Transverse colon (tissue), 4 donors: ENCODE measurements at regions of chr5 and their contacts with region 1.

Region 1: GRCh38 chr5:115309751-115310370 is 13.4 kb upstream of the CCDC112 start:
- DNase-seq: no peak
- H3K4me3 ChIP-seq: no peak overlapping the region
- H3K27ac ChIP-seq: no peak overlapping the region
- H3K4me1 ChIP-seq: peaks cover 0 to 14% (median 6%) of the 10 kb centered on the region in 4 donors
- H3K27me3 ChIP-seq: no peaks in the 10 kb centered on the region
- CTCF ChIP-seq: peak; percentile 65 to 79 (median 71)
- EP300 ChIP-seq: no peak
- POLR2A ChIP-seq: no peak

Region 2: DNA sequence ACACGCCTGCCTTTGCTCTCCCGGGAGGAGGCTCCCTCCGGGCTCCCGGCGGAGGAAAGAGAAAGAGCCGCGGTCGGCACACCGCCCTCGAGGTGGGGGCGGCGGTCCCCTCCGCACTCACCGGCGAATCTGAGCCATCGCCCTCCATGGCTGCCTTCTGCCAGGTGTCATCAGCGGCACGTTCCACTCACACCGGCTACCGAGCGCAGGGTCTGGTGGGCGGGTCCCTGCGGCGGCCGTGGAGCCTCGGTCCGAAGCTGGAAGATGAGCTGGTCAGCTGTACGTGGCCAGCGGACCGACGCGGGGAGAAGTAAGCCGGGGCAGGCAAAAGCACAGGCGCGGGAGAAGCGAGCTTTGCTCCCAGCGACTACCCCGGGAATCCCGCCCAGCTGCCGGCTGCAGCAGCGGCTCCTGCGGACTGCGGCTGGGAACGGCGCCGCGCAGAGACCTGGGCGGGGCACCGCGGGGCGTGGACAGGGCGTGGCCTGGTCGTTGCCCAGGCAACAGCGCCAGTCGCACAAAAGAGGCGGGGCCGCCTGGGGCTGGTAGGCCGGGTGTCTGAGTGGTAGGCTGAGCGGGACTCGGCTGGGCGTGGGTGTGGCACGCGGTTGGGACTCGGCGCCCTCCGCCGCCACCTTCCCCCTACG is 140.3 kb before region 1 on chr5 and contains the start of gene TRIM36:
- in situ Hi-C with region 1: no loop called
- intact Hi-C with region 1: no loop called
- DNase-seq: peak; percentile 96
- H3K4me3 ChIP-seq: peak within 1 kb of the TSS; percentile 61 to 85 (median 66)
- H3K27ac ChIP-seq: peak within 1 kb of the TSS; percentile 83 to 93 (median 90)
- H3K4me1 ChIP-seq: peaks cover 0 to 32% (median 20%) of the 10 kb centered on the region in 4 donors
- H3K27me3 ChIP-seq: peaks cover 48% of the 10 kb centered on the region
- CTCF ChIP-seq: peak in 2 of 5 experiments; percentile 17 to 20
- EP300 ChIP-seq: no peak
- POLR2A ChIP-seq: peak; percentile 93
- total RNA-seq, gene TRIM36: 30.8 to 69.1 (median 38.2) TPM

Region 3: DNA sequence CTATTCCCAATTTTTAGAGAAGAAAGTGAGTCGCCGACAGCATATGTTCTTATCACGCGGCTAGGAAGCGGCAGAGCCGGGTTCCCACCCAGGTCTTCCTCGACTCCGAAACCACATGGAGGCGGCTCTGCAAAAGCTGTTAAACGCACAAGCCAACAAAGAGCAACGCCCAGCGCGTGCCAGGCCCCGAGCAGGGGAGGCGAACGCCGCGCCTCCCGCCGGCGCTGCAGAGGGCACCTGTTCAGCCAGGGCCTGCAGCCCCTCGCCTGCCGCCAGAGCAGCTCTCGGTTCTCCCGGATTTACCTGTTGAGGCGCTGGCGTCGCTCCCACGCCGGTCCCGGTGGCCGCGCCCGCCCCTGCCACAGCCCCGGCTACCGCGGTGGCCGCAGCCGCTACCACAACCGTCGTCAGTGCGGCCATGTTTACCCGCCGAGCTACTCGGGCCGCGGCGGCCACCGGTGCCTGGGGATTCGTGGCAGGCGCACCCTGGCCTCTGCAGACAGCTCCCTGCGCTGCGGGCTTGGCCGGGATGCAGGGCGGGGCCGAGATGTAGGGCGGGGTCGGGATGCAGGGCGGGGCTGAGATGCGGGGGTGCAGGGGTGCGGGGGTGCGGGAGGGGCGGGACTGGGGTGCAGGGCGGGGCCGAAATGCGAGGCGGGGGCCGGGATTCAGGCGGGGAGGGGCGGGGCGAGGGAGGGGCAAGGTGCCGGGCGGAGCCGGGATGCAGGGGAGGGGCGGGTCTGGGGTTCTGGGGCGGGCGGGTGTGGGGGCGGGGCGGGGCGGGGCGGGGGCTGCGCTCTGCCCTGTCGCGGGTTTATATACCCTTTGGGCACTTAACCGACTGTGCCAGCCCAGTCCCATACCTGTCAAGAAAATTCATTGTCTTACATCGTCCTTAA is 13.5 kb before region 1 on chr5 and contains the start of gene CCDC112:
- in situ Hi-C with region 1: no loop called
- intact Hi-C with region 1: no loop called
- DNase-seq: peak; percentile 90
- H3K4me3 ChIP-seq: peak within 1 kb of the TSS; percentile 69 to 88 (median 76)
- H3K27ac ChIP-seq: peak within 1 kb of the TSS; percentile 84 to 92 (median 86)
- H3K4me1 ChIP-seq: peaks cover 0 to 20% (median 15%) of the 10 kb centered on the region in 4 donors
- H3K27me3 ChIP-seq: no peaks in the 10 kb centered on the region
- CTCF ChIP-seq: no peak
- EP300 ChIP-seq: no peak
- POLR2A ChIP-seq: peak; percentile 81
- total RNA-seq, gene CCDC112: 15.7 to 22.4 (median 20.5) TPM

Region 4: GRCh38 chr5:115480245-115480644 is 170.4 kb after region 1 on chr5:
- in situ Hi-C with region 1: no loop called
- intact Hi-C with region 1: no loop called
- DNase-seq: no peak
- H3K4me3 ChIP-seq: no peak overlapping the region
- H3K27ac ChIP-seq: no peak overlapping the region
- H3K4me1 ChIP-seq: no peaks in the 10 kb centered on the region
- H3K27me3 ChIP-seq: no peaks in the 10 kb centered on the region
- CTCF ChIP-seq: no peak
- EP300 ChIP-seq: no peak
- POLR2A ChIP-seq: no peak

Region 5: DNA sequence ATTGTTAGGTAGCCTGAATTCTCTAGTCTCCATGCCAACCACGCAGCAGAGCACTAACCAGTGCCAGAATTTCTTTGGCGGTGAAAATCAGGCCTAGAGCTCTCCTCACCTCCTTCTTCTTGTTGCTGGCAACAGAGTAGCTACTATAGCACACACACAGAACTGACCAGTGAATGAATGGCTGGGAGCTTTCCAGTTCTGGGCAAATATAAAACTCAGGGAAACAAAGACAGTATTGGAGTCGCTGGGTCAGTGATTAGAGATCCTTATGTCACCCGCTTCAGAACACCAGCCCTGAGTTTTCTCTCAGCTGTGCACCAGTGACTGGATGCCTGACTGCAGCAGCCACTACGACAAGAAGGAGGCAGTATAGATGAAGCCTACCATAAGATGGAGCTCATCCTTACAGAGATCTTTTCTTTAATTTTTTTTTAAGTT is 261.6 kb after region 1 on chr5:
- in situ Hi-C with region 1: no loop called
- intact Hi-C with region 1: loop called (anchors 5 kb)
- DNase-seq: no peak
- H3K4me3 ChIP-seq: no peak overlapping the region
- H3K27ac ChIP-seq: no peak overlapping the region
- H3K4me1 ChIP-seq: no peaks in the 10 kb centered on the region
- H3K27me3 ChIP-seq: no peaks in the 10 kb centered on the region
- CTCF ChIP-seq: no peak
- EP300 ChIP-seq: no peak
- POLR2A ChIP-seq: no peak

Region 6: GRCh38 chr5:115586601-115587048 is 276.8 kb after region 1 on chr5:
- in situ Hi-C with region 1: loop called (anchors 5 to 10 kb)
- intact Hi-C with region 1: loop called (anchors 2 kb)
- DNase-seq: no peak
- H3K4me3 ChIP-seq: no peak overlapping the region
- H3K27ac ChIP-seq: no peak overlapping the region
- H3K4me1 ChIP-seq: peaks cover 0 to 13% (median 0%) of the 10 kb centered on the region in 4 donors
- H3K27me3 ChIP-seq: no peaks in the 10 kb centered on the region
- CTCF ChIP-seq: peak; percentile 50 to 63 (median 60)
- EP300 ChIP-seq: no peak
- POLR2A ChIP-seq: no peak

Region 7: GRCh38 chr5:115841382-115842088 is 531.7 kb after region 1 on chr5 and contains the starts of genes AP3S1 and ATG12:
- in situ Hi-C with region 1: loop called in 2 of 4 experiments (anchors 25 kb)
- intact Hi-C with region 1: no loop called
- DNase-seq: peak; percentile 93
- H3K4me3 ChIP-seq: peak within 1 kb of the TSS; percentile 63 to 85 (median 78)
- H3K27ac ChIP-seq: peak within 1 kb of the TSS; percentile 92 to 94 (median 94)
- H3K4me1 ChIP-seq: peaks cover 28 to 56% (median 34%) of the 10 kb centered on the region in 4 donors
- H3K27me3 ChIP-seq: no peaks in the 10 kb centered on the region
- CTCF ChIP-seq: no peak
- EP300 ChIP-seq: no peak
- POLR2A ChIP-seq: peak; percentile 94
- total RNA-seq, gene AP3S1: 54.2 to 258 (median 65.7) TPM
- total RNA-seq, gene ATG12: 18.7 to 51.3 (median 31.4) TPM

Region 8: DNA sequence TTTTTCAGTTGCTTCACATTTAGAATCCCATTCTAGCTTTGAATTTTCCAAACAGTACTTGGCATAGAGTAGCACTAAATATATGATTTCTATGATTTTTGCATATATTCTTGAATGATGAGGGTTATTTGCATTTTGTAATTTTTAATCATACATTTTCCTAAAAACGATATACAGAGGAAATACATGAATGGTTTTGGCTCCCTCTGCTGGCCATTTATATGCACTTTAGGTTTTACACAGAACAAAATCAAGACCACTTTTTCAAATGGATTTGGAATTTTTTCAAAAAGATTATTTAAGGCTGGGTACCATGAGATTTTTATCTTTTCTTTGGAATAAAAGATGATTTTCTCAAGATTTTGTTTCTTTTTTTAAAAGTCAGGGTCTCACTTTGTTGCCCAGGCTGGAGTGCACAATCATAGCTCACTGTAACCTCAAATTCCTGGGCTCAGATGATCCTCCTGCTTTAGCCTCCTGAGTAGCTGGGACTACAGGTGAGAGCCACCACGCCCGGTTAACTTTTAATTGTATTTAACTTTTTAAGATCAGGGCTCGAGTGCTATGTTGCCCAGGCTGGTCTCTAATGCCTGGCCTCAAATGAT is 758.3 kb after region 1 on chr5:
- in situ Hi-C with region 1: loop called (anchors 25 kb)
- intact Hi-C with region 1: no loop called
- DNase-seq: no peak
- H3K4me3 ChIP-seq: no peak overlapping the region
- H3K27ac ChIP-seq: no peak overlapping the region
- H3K4me1 ChIP-seq: no peaks in the 10 kb centered on the region
- H3K27me3 ChIP-seq: peaks cover 19% of the 10 kb centered on the region
- CTCF ChIP-seq: peak; percentile 70 to 89 (median 86)
- EP300 ChIP-seq: no peak
- POLR2A ChIP-seq: no peak